ENCODE measurements at regions of chr2 and their contacts with region 1.

Region 1: GRCh38 chr2:126776692-126777619 is 121.0 kb downstream of the GYPC start:
- DNase-seq: peak; percentile 91

Region 2: GRCh38 chr2:125745514-125745913 is 1031.4 kb before region 1 on chr2:
- intact Hi-C with region 1: loop called (anchors 5 kb)
- DNase-seq: no peak

Region 3: DNA sequence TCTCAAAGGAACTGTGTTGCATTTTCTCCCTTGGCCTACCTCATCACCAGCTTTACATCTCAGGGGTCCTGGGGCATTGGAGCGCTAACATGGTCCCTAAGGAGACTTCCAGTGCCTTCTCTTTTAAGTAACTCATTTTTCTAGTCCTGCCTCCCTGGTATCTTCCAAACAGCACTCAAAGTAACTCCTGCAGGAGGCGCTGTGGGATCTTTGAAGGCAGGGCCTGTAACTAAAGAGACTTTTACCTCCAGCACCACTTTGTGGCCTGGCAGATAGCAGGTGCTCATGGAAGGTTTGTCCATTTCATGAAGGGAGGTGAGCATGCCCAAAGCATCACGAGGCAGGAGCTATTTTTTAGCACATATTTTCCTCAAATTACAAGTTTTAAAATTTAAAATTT is 532.0 kb before region 1 on chr2:
- intact Hi-C with region 1: loop called (anchors 5 kb)
- DNase-seq: no peak

Region 4: GRCh38 chr2:126527836-126528507 is 249.0 kb before region 1 on chr2:
- intact Hi-C with region 1: loop called (anchors 1 kb)
- DNase-seq: no peak

Region 5: GRCh38 chr2:126657636-126658318 is 119.2 kb before region 1 on chr2:
- intact Hi-C with region 1: loop called (anchors 5 kb)
- DNase-seq: peak; percentile 93

Region 6: GRCh38 chr2:127277028-127277427 is 500.1 kb after region 1 on chr2:
- intact Hi-C with region 1: no loop called
- DNase-seq: no peak